Cardiac septum (tissue), 1 donor: ENCODE measurements at regions of chr19 and their contacts with region 1.

Region 1: DNA sequence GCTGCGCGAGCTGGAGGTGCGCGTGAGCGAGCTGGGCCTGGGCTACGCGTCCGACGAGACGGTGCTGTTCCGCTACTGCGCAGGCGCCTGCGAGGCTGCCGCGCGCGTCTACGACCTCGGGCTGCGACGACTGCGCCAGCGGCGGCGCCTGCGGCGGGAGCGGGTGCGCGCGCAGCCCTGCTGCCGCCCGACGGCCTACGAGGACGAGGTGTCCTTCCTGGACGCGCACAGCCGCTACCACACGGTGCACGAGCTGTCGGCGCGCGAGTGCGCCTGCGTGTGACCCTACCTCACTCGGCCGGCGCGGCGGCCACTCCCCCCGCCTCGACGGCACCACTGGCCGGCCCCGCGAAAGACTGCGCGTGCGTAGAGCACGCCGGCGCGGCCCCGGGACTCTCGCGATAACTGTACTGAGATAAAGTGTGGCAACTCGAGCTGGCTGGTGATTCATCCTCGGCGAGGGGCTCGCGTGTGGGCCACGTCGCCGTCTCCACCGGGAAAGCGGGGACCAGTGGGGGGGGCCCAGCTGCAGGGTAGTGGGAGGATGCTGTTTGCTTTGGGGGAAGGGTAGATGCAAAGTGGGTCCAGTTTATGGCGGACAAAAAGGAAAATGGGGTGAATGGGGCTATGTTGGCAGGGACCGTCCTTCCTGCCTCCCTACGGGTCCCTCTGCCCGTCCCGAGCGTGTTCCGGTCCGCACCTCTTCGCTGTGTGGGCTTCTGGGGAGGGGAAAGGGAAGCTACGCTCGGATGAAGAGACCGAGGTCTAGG is 11.4 kb downstream of the FUT6 start:
- DNase-seq: peak; percentile 88

Region 2: DNA sequence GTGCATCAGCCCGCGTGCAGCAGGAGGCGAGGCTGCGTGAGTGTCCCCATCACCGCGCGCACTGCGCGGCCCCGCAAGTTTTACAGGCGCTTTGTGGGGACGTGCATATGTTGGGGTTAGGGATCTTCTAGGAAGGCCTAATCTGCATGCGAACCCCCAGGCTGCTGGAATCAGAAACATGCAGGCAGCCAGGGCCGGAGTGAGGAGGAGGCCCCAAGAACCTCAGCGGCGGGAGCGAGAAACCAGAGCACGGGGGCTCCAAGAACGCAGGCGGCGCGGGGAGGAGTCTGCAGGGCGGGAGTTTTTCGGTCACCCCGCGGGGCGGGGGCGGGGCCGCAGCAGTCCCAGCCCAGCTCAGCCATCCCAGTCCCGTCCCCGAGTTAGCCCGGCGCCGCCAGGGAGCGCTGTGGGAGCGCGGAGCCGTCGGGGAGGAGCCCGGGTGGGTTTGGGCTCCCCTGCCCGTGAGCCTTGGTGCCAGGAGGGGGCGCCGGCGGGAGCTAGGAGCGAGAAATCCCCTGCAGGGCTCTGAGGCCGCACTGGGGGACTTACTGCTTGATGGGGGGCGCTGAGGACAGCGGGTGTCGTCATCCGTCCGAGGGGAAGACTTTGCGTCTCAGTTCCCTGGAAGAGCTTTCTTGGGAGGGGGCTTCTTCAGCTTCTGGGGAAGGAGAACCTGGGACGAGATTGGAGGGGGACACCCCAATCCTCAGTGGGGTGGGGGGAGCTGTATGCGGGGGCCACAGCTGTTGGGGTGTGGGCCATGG is 24.1 kb before region 1 on chr19:
- intact Hi-C with region 1: loop called (anchors 2 kb)
- DNase-seq: peak; percentile 93

Region 3: DNA sequence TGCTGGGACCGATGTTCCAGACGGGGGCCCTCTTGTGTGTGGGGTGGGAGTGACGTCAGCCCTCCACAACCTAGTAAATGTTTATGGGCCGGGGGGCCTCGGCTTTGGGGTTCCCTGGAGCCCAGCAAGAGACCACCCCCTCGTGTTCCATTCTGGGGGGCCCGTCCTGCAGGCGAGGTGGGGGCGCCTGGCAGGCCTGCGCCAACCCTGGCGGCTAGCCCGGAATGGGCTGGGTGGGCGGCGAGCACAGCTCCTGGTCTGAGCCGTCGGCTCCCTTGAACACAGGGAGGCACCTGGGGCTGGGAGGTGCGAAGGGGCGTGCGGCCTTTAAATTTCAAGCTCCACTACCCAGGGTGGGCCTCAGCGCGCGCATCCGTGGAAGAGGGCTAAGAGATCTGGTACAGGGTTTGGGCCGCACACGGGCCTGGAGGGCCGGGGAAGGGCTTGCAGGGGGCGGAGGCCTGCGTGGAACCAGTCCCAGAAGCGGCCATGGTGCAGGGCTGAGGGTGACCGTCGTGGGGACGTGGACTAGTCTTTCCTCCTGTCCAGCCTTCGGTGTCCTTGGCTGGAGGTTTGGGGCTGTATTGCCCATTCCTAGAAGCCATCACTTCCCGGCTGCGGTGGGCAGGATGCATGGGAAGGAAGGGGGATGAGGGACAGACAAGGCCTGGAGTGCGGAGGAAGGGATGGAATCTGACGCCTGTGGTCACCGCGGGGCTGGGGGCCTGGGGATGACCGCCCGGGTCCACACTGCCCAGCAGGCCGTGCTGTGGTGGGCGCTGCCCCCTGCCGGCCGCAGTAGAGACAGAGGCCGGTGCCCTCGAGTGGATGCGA is 64.1 kb after region 1 on chr19:
- intact Hi-C with region 1: loop called (anchors 5 kb)
- DNase-seq: no peak

Region 4: GRCh38 chr19:5926641-5927440 is 98.8 kb after region 1 on chr19:
- intact Hi-C with region 1: no loop called
- DNase-seq: peak; percentile 79

Region 5: GRCh38 chr19:5959666-5960338 is 131.7 kb after region 1 on chr19:
- intact Hi-C with region 1: loop called (anchors 5 kb)
- DNase-seq: no peak